PC-9 (cell line): ENCODE measurements at regions of chr16 and their contacts with region 1.

Region 1: DNA sequence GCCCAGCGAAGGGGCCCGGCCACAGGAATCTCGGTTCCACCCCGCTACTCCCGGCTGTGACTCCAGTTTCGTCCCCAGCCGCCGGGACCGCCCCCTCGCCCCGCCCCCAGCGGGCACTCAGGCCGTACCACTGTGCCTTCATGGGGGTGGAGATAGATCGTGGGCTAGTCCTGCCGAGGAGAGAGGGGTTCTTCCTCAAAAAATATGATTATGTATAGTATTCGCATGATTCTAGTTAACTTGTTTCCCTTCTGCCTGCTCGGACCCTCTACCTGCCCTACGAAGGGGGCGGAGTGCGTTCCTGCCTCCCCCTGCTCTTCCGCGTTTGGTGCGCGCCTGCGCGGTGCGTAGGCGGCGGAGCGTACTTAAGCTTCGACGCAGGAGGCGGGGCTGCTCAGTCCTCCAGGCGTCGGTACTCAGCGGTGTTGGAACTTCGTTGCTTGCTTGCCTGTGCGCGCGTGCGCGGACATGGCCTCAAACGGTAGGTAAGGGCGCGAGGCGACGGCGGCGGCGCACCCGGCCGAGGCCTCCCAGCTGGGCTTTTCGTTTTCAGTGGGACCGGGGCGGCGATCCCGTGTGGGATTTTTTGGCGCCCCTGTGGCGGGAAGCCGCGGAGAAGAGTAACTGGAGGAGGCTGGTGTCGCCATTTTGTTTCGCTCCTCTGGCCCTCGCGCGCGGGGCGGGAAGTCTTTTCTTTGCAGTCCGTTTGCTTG is at the start of gene FUS:
- DNase-seq: peak; percentile 80 to 93
- H3K4me3 ChIP-seq: peak within 1 kb of the TSS; percentile 83
- H3K27ac ChIP-seq: peak within 1 kb of the TSS; percentile 94
- H3K4me1 ChIP-seq: peaks cover 22% of the 10 kb centered on the region
- H3K27me3 ChIP-seq: no peaks in the 10 kb centered on the region
- CTCF ChIP-seq: no peak
- total RNA-seq, gene FUS: 429 and 637 TPM in 2 replicates

Region 2: DNA sequence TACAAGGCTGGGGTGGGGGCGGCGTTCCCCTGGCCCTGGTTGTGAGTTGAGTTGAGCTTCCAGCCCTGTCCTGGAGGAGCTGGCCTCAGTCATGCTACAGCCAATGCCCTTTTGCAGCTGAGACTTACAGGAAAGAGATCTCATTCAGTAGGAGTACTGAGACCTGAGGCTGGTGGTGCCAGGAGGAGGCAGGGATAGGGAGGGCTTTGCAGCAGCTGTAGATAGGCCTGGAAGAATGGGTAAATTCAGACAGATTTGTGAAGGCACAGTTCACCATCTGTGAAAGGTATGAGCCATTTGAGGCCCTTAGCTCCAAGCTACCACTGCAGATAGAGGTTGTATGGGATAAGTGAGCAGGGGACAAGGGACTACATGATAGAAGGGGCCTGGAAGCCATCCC is 140.9 kb before region 1 on chr16:
- CTCF ChIA-PET with region 1: no interaction called
- POLR2A ChIA-PET with region 1: no interaction called
- intact Hi-C with region 1: no loop called
- DNase-seq: no peak
- H3K4me3 ChIP-seq: no peak overlapping the region
- H3K27ac ChIP-seq: no peak overlapping the region
- H3K4me1 ChIP-seq: peaks cover 5% of the 10 kb centered on the region
- H3K27me3 ChIP-seq: no peaks in the 10 kb centered on the region
- CTCF ChIP-seq: no peak

Region 3: DNA sequence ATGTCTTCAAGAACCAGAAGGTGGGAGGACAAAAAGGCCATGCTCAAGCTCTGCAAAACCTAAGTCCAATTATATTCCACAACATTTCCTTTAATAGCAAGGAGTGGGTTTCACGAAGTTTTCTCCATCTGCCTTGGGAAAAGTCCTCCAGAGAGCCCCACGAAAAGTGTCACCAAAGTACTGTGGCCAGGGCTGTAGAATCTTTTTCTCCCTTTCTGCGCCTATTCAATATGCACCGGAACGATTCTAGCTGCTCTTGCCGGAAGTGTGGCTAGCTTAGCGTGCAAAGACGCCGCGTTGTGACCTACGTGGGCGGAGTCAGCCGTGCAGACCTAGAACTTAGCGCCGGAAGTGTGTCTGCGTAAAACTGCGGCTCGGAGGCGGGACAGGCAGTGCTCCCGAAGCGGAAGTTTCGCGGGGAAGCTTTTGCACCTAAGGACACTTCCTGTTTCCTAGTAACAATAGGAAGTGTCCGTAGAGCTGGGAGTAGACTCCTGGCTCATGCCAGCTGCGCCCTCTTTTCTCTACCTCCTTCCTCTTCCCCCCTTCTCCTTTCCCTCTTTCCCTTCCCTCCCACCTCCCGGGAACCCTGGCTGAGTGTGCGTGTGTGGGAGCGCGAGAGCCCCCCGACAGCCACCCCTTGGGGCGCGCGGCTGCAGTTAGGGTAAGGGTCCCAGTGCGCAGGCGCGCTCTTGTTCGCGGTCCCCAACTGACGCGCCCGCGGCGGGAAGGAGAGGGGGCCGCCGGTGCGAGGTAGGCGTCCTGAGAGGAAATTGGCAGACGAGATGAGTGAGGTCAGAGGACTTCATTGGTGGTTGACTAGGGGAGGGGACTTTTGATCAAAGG is 105.7 kb before region 1 on chr16 and contains the starts of genes ZNF646 and ZNF668:
- CTCF ChIA-PET with region 1: no interaction called
- POLR2A ChIA-PET with region 1: interaction called, 5 read pairs
- intact Hi-C with region 1: loop called (anchors 1 kb)
- DNase-seq: peak; percentile 98 to 99
- H3K4me3 ChIP-seq: peak within 1 kb of the TSS; percentile 89
- H3K27ac ChIP-seq: peak within 1 kb of the TSS; percentile 62
- H3K4me1 ChIP-seq: peaks cover 20% of the 10 kb centered on the region
- H3K27me3 ChIP-seq: no peaks in the 10 kb centered on the region
- CTCF ChIP-seq: no peak
- total RNA-seq, gene ZNF646: 25.4 and 30.7 TPM in 2 replicates
- total RNA-seq, gene ZNF668: 13.2 and 17.4 TPM in 2 replicates

Region 4: DNA sequence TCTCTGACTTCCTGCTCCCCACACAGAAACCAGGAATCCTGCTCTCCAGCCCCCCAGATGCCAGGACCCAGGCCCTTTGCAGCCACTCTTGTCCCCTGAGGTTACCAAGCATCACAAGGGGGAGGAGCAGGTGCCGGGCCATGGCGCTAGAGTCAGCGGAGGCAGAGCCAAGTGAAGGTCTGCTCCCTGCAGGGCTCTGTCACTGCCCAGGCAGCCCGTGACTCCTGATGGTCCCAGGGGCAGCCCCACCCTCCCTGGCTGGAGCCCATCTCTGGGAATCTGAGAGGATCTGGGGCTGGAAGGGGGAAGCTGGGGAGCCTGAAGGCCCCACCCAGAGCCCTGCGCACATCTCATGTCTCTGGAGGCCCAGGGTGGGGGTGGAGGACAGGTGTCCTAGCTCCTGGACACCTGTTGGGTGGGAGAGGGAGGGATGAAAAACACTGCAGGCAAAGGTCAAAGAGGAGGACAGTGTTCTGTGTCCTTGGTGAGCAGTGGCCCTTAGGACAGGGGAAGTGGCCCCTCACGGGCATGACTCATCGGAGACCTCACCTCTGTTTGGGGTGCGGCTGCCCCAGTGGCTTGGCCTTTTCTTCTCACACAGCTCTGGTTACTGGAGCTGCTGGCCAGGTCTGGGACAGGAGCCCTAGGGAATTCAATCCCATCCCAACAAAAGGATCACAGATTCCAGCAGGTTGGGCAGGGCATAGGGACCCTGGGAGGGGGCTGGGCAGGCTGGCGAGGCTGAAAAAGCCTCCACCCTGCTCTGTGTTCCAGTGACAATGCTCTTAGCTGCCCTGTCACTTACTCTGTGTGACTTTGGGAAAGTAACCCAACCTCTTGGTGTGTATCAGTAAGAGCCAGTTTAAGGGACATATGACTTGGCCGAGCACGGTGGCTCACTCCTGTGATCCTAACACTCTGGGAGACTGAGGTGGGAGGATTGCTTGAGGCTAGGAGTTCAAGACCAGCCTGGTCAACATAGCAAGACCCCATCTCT is 29.7 kb before region 1 on chr16 and contains the start of gene PRSS36:
- CTCF ChIA-PET with region 1: no interaction called
- POLR2A ChIA-PET with region 1: interaction called, 3 read pairs
- intact Hi-C with region 1: loop called (anchors 1 kb)
- DNase-seq: peak; percentile 72 to 89
- H3K4me3 ChIP-seq: no peak within 1 kb of the TSS
- H3K27ac ChIP-seq: peak within 1 kb of the TSS; percentile 68
- H3K4me1 ChIP-seq: peaks cover 32% of the 10 kb centered on the region
- H3K27me3 ChIP-seq: no peaks in the 10 kb centered on the region
- CTCF ChIP-seq: no peak
- total RNA-seq, gene PRSS36: 4.1 and 6.8 TPM in 2 replicates

Region 5: GRCh38 chr16:31192856-31193642 is 13.1 kb after region 1 on chr16:
- CTCF ChIA-PET with region 1: no interaction called
- POLR2A ChIA-PET with region 1: interaction called, 14 read pairs
- intact Hi-C with region 1: no loop called
- DNase-seq: no peak
- H3K4me3 ChIP-seq: no peak overlapping the region
- H3K27ac ChIP-seq: no peak overlapping the region
- H3K4me1 ChIP-seq: no peaks in the 10 kb centered on the region
- H3K27me3 ChIP-seq: no peaks in the 10 kb centered on the region
- CTCF ChIP-seq: no peak